OCI-LY7 (cell line): ENCODE measurements at regions of chr19 and their contacts with region 1.

Region 1: DNA sequence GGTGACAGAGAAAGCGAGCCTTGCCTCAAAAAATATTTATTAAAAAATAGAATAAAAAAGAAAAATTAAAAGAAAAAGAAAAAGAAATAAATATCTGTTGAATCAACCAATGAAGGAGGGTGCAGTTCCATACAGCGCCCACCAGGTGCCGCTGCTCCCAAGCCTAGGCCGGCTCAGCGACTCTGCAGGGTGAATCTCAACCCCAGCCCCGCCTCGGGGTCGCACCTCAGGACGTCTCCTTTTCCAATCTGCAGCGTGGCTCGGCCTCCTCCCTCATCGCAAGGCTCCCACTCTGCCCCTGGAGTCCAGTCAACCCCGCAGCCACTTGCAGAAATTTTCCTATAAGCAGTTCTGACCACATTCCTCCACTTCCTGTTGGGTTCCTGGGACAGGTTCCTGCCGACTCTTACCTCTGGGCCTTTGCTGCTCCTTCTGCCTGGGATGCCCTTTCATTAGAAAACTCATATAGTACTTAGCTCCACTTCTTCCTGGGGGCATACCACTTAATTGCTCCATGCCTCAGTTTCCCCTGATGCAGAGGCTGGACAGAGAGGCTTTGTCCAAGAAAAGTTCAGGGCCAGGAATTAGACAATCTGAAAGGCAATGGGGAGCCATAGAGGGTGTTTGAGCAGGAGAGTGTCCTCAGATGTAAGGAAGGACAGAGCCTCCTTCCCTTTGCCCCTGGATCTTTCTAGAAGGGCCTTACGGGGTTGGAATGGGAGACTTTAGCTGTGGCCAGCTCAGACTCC is 24.3 kb downstream of the NFILZ start:
- DNase-seq: peak; percentile 71
- H3K4me3 ChIP-seq: no peak overlapping the region
- H3K27ac ChIP-seq: no peak overlapping the region
- H3K4me1 ChIP-seq: peaks cover 7% of the 10 kb centered on the region
- CTCF ChIP-seq: peak; percentile 91

Region 2: GRCh38 chr19:8697671-8698432 is 43.1 kb after region 1 on chr19:
- CTCF ChIA-PET with region 1: interaction called, 3 read pairs
- POLR2A ChIA-PET with region 1: no interaction called
- intact Hi-C with region 1: loop called (anchors 1 kb)
- DNase-seq: no peak
- H3K4me3 ChIP-seq: no peak overlapping the region
- H3K27ac ChIP-seq: no peak overlapping the region
- H3K4me1 ChIP-seq: no peaks in the 10 kb centered on the region
- CTCF ChIP-seq: peak; percentile 61

Region 3: DNA sequence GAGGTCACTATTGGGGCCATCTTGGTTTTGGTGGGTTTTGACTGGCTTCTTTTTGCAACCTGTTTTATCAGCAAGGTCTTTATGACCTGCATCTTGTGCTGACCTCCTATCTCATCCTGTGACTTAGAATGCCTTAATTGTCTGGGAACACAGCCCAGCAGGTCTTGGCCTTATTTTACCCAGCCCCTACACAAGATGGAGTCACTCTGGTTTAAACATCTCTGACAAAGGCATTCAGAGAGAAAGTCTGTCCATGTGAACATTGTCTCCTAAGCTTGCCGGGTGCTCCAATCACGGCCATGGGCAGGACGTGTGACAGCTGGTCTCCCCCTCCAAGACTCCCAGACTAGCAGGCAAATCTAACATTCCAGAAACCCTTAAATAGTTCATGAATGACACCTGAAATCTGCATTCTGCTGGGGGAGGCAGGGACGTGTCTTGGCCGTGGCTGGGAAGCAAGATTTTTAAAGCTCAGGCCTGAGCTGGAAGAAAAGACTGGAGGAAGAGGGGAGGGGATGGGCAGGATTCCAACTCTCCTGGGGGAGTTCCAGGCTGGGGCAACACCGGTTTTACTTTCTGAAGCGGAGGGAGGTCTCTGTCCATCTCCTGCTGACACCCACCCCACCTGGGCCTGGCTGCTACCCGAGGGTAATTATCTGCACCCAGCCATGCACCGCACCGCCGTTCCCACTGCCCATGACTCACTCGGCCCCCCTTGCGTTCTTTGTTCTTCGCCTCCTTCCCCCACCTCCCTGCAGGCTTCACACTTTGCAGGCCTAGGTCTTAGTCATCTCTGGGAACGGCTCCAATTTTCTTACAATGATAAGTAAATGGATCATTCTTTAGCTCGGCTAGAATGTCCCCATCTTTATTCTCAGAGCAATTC is 420.5 kb after region 1 on chr19:
- CTCF ChIA-PET with region 1: no interaction called
- POLR2A ChIA-PET with region 1: no interaction called
- intact Hi-C with region 1: loop called (anchors 5 kb)
- DNase-seq: no peak
- H3K4me3 ChIP-seq: no peak overlapping the region
- H3K27ac ChIP-seq: no peak overlapping the region
- H3K4me1 ChIP-seq: no peaks in the 10 kb centered on the region
- CTCF ChIP-seq: no peak